ENCODE measurements at regions of chr4 and their contacts with region 1.

Region 1: GRCh38 chr4:122777846-122778655 is 45.5 kb downstream of the BBS12 start:
- DNase-seq: peak; percentile 82
- ATAC-seq: peak; percentile 82
- H3K4me3 ChIP-seq: no peak overlapping the region
- H3K27ac ChIP-seq: peak overlapping the region; percentile 58; the same call in 1 of the 2 replicates
- H3K4me1 ChIP-seq: peaks cover 14% of the 10 kb centered on the region; the same call in 1 of the 2 replicates
- H3K27me3 ChIP-seq: no peaks in the 10 kb centered on the region
- CTCF ChIP-seq: no peak
- POLR2A ChIP-seq: no peak
- RAD21 ChIP-seq: no peak

Region 2: GRCh38 chr4:122764821-122765215 is 13.2 kb before region 1 on chr4:
- CTCF ChIA-PET with region 1: no interaction called
- POLR2A ChIA-PET with region 1: no interaction called
- dilution Hi-C with region 1: no loop called
- in situ Hi-C with region 1: no loop called
- intact Hi-C with region 1: loop called (anchors 2 kb)
- DNase-seq: peak; percentile 92
- ATAC-seq: peak; percentile 57
- H3K4me3 ChIP-seq: no peak overlapping the region
- H3K27ac ChIP-seq: peak overlapping the region; percentile 55; the same call in 1 of the 2 replicates
- H3K4me1 ChIP-seq: peaks cover 4% of the 10 kb centered on the region; the same call in 1 of the 2 replicates
- H3K27me3 ChIP-seq: no peaks in the 10 kb centered on the region
- CTCF ChIP-seq: no peak
- POLR2A ChIP-seq: peak; percentile 33; the same call in 1 of the 2 replicates
- RAD21 ChIP-seq: peak; percentile 15; the same call in 1 of the 2 replicates